ENCODE measurements at regions of chr6 and their contacts with region 1.

Region 1: DNA sequence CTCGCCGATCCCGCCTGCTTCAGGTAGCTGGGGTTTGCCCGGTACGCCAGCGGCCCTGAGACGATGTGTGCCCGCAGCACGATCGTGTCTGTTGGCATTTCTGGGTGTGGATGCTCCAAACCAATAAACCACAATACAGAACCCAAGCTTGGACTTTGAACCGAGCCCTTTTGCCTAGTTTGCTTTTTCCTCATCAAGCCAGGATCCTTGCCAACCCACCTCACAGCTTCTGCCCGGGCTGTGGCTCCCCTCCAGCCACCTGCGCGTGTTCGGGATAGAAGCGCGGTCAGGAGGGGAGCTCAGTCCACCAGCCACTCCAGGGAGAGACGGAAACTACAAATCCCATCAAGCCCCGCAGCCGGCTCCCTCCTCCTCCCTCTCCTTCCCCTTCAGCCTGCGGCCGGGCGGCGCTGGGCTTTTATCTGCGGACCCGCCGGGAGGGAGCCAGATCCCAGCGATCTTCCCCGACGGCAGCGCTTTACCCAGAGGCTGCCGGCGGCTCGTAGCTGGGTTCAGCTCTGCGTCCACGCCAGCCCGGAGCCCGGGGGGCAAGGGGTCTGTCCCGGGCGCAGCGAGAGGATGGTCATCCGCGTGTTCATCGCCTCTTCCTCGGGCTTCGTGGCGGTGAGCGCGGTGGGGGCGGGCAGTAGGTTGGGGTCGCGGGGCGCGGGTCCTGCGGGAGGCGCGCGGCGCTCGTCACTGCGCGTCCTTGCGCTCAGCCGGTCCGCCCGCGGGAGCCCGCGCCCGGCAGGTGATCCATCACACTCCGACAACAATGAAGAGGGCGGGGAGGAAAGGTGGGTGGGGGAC is at the start of gene SH3BGRL2:
- DNase-seq: peak; percentile 89
- ATAC-seq: peak; percentile 94
- H3K4me3 ChIP-seq: peak within 1 kb of the TSS; percentile 76 to 83 (median 81)
- H3K27ac ChIP-seq: peak within 1 kb of the TSS; percentile 92
- H3K4me1 ChIP-seq: peaks cover 60% of the 10 kb centered on the region
- H3K27me3 ChIP-seq: no peaks in the 10 kb centered on the region; a peak in 1 of 5 replicates
- CTCF ChIP-seq: no peak
- EP300 ChIP-seq: no peak; a peak in 1 of 4 replicates
- POLR2A ChIP-seq: peak; percentile 62 to 71
- RAD21 ChIP-seq: peak; percentile 23; the same call in 1 of the 2 replicates
- total RNA-seq, gene SH3BGRL2: 28.8 and 49.2 TPM in 2 replicates

Region 2: DNA sequence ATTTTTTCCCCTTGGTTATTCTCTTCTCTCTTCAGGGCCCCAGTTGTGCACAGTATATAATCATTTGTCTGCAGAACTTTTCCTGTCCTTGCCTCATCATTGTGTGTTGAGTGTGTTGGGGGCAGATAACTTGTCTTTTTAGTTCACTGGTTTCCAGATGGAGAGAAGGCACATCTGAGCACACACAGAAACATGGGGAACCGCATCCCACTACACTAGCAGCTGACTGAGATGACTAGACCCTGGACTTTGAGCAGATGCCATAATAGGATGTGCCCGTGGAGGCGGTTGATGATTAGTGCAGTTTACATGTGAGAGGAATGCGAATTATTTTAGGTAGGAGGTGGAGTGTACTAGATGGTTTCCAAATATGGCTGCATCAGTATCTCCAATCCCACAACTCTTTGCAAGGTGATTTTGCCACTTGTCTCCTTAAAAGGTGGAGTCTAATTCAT is 26.5 kb before region 1 on chr6:
- CTCF ChIA-PET with region 1: no interaction called
- POLR2A ChIA-PET with region 1: interaction called, 46 read pairs
- in situ Hi-C with region 1: no loop called
- intact Hi-C with region 1: loop called (anchors 1 kb)
- DNase-seq: peak; percentile 95
- ATAC-seq: peak; percentile 73
- H3K4me3 ChIP-seq: no peak overlapping the region
- H3K27ac ChIP-seq: peak overlapping the region; percentile 54
- H3K4me1 ChIP-seq: peaks cover 84% of the 10 kb centered on the region
- H3K27me3 ChIP-seq: no peaks in the 10 kb centered on the region
- CTCF ChIP-seq: no peak
- EP300 ChIP-seq: peak; percentile 21 to 73; a peak in 2 of 4 replicates
- POLR2A ChIP-seq: peak in 1 of 2 experiments; percentile 34; a peak in 1 of 4 replicates
- RAD21 ChIP-seq: no peak

Region 3: DNA sequence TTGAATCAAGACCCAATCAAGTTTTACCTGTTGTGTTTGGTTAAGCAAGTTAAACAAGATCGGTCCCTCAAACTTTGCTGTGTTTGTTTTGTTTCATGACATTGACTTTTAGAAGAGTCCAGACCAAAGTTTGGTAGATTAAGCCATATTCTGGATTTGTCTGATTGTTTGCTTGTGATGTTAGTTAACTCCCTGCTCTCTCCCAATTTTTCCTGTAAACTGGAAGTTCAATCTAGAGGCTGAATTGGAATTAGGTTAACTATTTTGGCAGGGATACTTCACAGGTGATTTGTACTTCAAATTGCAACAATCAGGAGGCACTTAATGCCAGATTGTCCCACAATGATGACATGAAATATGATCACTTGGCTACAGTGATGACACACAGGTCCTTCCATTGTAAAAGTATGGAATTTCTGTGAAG is 13.6 kb before region 1 on chr6:
- CTCF ChIA-PET with region 1: no interaction called
- POLR2A ChIA-PET with region 1: interaction called, 6 read pairs
- in situ Hi-C with region 1: no loop called
- intact Hi-C with region 1: loop called (anchors 2 kb)
- DNase-seq: peak; percentile 91
- ATAC-seq: peak; percentile 78
- H3K4me3 ChIP-seq: 0 out of 6 replicates have a peak overlapping the region, but pooled peaks of 1 of the 3 experiments have one; percentile 0
- H3K27ac ChIP-seq: peak overlapping the region; percentile 86
- H3K4me1 ChIP-seq: peaks cover 100% of the 10 kb centered on the region
- H3K27me3 ChIP-seq: no peaks in the 10 kb centered on the region
- CTCF ChIP-seq: no peak
- EP300 ChIP-seq: peak in 1 of 2 experiments; percentile 91; a peak in 2 of 4 replicates
- POLR2A ChIP-seq: no peak
- RAD21 ChIP-seq: no peak

Region 4: DNA sequence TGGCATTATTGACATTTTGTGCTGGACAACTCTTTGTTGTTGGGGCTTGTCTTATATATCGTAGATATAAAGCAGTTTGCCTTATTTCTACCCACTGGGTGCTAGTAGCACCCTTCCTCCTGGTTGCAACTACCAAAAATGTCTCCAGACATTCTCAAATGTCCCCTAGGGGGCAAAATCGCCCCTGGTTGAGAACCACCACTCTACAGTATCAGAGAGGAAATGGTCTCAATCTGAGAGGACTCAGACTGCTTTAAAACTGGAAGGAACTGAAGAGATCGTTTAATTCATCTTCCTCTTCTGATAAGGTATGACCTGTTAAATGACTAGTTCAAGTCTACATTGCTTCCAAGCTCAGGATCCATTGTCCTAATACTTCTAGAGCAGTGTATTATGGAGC is 14.9 kb after region 1 on chr6:
- CTCF ChIA-PET with region 1: no interaction called
- POLR2A ChIA-PET with region 1: interaction called, 26 read pairs
- in situ Hi-C with region 1: no loop called
- intact Hi-C with region 1: no loop called
- DNase-seq: no peak
- ATAC-seq: peak; percentile 75
- H3K4me3 ChIP-seq: no peak overlapping the region
- H3K27ac ChIP-seq: no peak overlapping the region
- H3K4me1 ChIP-seq: peaks cover 43% of the 10 kb centered on the region
- H3K27me3 ChIP-seq: no peaks in the 10 kb centered on the region
- CTCF ChIP-seq: peak; percentile 28; the same call in 1 of the 2 replicates
- EP300 ChIP-seq: no peak
- POLR2A ChIP-seq: no peak
- RAD21 ChIP-seq: no peak

Region 5: GRCh38 chr6:79672631-79673111 is 41.6 kb after region 1 on chr6:
- CTCF ChIA-PET with region 1: no interaction called
- POLR2A ChIA-PET with region 1: interaction called, 5 read pairs
- in situ Hi-C with region 1: no loop called
- intact Hi-C with region 1: loop called (anchors 1 kb)
- DNase-seq: peak; percentile 76
- ATAC-seq: peak; percentile 77
- H3K4me3 ChIP-seq: no peak overlapping the region
- H3K27ac ChIP-seq: peak overlapping the region; percentile 2
- H3K4me1 ChIP-seq: peaks cover 68% of the 10 kb centered on the region
- H3K27me3 ChIP-seq: no peaks in the 10 kb centered on the region
- CTCF ChIP-seq: peak; percentile 71
- EP300 ChIP-seq: peak in 1 of 2 experiments; percentile 62; a peak in 2 of 4 replicates
- POLR2A ChIP-seq: no peak
- RAD21 ChIP-seq: 0 out of 2 replicates have a peak, but pooled peaks have one; percentile 17

Region 6: DNA sequence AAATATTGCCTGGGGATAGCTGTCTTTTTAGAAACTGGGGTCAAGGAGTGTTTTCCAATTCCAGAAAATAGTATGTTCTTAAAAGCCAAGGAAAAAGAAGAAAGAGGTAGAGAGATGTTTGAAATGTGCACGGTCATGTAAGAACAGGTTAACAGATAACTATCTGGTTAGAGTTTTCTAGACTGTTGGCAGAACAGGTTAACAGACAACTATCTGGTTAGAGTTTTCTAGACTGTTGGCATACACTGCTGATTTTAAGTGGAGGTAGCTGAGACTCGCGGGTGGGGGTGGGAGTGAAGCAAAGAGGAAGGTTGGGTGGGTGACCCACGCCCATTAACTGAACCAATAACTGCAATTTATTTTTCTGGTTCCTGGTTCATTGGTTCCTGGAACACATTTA is 158.8 kb after region 1 on chr6:
- CTCF ChIA-PET with region 1: no interaction called
- POLR2A ChIA-PET with region 1: no interaction called
- in situ Hi-C with region 1: no loop called
- intact Hi-C with region 1: no loop called
- DNase-seq: no peak
- ATAC-seq: no peak
- H3K4me3 ChIP-seq: no peak overlapping the region
- H3K27ac ChIP-seq: no peak overlapping the region
- H3K4me1 ChIP-seq: no peaks in the 10 kb centered on the region
- H3K27me3 ChIP-seq: no peaks in the 10 kb centered on the region; a peak in 1 of 5 replicates
- CTCF ChIP-seq: no peak
- EP300 ChIP-seq: no peak
- POLR2A ChIP-seq: no peak
- RAD21 ChIP-seq: no peak

Region 7: DNA sequence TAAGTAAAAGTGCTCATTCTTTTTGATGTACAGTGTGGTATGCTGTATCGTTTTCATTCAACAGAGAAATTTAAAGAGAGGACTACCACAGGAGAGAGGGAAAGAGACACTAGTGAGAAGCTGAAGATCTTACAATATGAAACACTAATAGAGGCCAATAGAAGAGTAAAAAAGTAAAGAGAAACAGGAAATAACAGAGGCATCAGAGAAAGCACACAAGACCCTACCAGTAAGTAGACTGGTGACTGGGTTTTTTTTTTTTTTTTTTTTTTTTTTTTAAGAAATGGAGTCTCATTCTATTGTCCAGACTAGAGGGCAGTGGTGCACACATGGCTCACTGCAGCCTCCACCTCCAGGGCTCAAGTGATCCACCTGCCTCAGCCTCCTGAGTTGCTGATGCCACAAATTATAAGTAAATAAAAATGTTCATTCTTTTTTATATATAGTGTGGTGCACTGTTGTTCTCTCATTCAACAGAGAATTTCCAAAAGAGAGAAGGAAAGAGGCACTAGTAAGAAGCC is 297.4 kb after region 1 on chr6:
- CTCF ChIA-PET with region 1: no interaction called
- POLR2A ChIA-PET with region 1: no interaction called
- in situ Hi-C with region 1: no loop called
- intact Hi-C with region 1: no loop called
- DNase-seq: no peak
- ATAC-seq: peak; percentile 43; the same call in 1 of the 3 replicates
- H3K4me3 ChIP-seq: no peak overlapping the region
- H3K27ac ChIP-seq: no peak overlapping the region
- H3K4me1 ChIP-seq: no peaks in the 10 kb centered on the region
- H3K27me3 ChIP-seq: no peaks in the 10 kb centered on the region
- CTCF ChIP-seq: no peak
- EP300 ChIP-seq: no peak
- POLR2A ChIP-seq: no peak
- RAD21 ChIP-seq: no peak

Region 8: GRCh38 chr6:80886475-80886874 is 1255.4 kb after region 1 on chr6:
- CTCF ChIA-PET with region 1: no interaction called
- POLR2A ChIA-PET with region 1: no interaction called
- in situ Hi-C with region 1: no loop called
- intact Hi-C with region 1: no loop called
- DNase-seq: no peak
- ATAC-seq: no peak
- H3K4me3 ChIP-seq: no peak overlapping the region
- H3K27ac ChIP-seq: no peak overlapping the region
- H3K4me1 ChIP-seq: no peaks in the 10 kb centered on the region
- H3K27me3 ChIP-seq: no peaks in the 10 kb centered on the region
- CTCF ChIP-seq: no peak
- EP300 ChIP-seq: no peak
- POLR2A ChIP-seq: no peak
- RAD21 ChIP-seq: no peak